ENCODE measurements at regions of chr5 and their contacts with region 1.

Region 1: DNA sequence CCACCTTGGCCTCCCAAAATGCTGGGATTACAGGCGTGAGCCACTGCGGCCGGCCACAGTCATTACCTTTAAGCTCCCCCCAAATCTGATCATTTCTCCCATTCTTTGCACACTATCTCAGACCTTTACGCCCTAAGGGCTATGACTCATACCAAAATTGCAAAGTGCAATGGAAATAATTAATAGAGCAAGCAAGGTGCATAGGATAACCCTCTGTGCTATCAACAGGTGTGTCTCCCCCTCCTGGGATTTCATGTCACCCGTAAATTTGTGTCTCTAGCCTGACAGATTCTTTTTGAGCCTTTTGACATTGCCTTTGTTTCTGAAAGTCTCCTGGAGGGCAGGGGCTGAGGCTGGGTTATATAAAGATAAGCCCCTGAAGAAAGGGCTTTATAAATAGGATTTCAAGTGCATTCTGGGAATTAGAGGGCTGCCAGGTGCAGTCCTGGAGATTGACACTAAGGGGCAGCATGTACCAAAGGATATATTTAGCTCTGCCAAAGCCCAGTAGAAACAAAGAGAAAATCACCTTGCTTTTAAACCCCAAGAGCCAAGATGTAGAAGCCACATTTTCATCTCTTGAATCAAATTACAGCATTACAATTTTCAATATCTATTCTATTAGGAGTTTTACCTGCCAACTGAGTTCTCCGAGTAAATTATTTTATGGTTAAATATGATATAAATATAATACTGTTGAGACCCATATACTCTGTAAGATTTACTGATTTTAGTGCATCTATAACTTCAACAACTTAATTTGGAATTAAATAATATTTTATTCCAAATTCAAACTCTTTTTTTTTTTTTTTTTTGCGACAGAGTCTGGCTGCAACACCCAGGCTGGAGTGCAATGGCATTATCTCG is 18.2 kb downstream of the S100Z start:
- DNase-seq: peak; percentile 67 to 76 (median 72)
- ATAC-seq: peak; percentile 92
- H3K4me3 ChIP-seq: no peak overlapping the region
- H3K27ac ChIP-seq: no peak overlapping the region
- H3K4me1 ChIP-seq: no peaks in the 10 kb centered on the region
- H3K27me3 ChIP-seq: no peaks in the 10 kb centered on the region
- CTCF ChIP-seq: peak; percentile 76 to 94 (median 81)
- EP300 ChIP-seq: no peak
- POLR2A ChIP-seq: no peak
- RAD21 ChIP-seq: peak; percentile 95

Region 2: GRCh38 chr5:76256116-76256889 is 611.8 kb before region 1 on chr5:
- CTCF ChIA-PET with region 1: no interaction called
- POLR2A ChIA-PET with region 1: no interaction called
- in situ Hi-C with region 1: no loop called
- intact Hi-C with region 1: no loop called
- DNase-seq: peak; percentile 31 to 79 (median 50)
- ATAC-seq: peak; percentile 99
- H3K4me3 ChIP-seq: no peak overlapping the region
- H3K27ac ChIP-seq: no peak overlapping the region
- H3K4me1 ChIP-seq: no peaks in the 10 kb centered on the region
- H3K27me3 ChIP-seq: peaks cover 0 to 16% of the 10 kb centered on the region in 2 experiments; a peak in 2 of 5 replicates
- CTCF ChIP-seq: peak; percentile 81 to 94 (median 83)
- EP300 ChIP-seq: no peak
- POLR2A ChIP-seq: no peak
- RAD21 ChIP-seq: peak; percentile 95 to 96

Region 3: DNA sequence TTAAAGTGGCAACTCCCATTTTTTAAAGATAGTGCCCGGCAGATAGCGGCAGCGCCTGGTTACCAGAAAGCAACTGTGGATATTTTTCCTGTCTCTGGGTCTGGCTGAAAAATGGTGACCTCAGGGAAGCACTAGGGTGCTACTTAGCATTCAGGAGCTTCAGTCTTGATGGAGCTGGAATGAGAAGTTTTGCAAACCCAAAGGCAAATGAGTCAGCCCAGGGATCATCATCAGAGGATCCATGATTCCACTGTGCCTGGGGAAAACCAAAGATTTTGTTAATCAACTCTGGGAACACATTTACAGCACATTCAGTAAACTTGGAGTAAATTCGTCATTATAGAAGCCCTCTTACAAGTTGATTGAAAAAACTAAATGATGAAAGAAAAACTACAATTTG is 125.5 kb before region 1 on chr5:
- CTCF ChIA-PET with region 1: no interaction called
- POLR2A ChIA-PET with region 1: no interaction called
- in situ Hi-C with region 1: no loop called
- intact Hi-C with region 1: no loop called
- DNase-seq: no peak
- ATAC-seq: no peak
- H3K4me3 ChIP-seq: no peak overlapping the region
- H3K27ac ChIP-seq: no peak overlapping the region
- H3K4me1 ChIP-seq: peaks cover 6 to 17% of the 10 kb centered on the region in 2 experiments; a peak in 3 of 5 replicates
- H3K27me3 ChIP-seq: no peaks in the 10 kb centered on the region
- CTCF ChIP-seq: no peak
- EP300 ChIP-seq: no peak
- POLR2A ChIP-seq: no peak
- RAD21 ChIP-seq: no peak

Region 4: DNA sequence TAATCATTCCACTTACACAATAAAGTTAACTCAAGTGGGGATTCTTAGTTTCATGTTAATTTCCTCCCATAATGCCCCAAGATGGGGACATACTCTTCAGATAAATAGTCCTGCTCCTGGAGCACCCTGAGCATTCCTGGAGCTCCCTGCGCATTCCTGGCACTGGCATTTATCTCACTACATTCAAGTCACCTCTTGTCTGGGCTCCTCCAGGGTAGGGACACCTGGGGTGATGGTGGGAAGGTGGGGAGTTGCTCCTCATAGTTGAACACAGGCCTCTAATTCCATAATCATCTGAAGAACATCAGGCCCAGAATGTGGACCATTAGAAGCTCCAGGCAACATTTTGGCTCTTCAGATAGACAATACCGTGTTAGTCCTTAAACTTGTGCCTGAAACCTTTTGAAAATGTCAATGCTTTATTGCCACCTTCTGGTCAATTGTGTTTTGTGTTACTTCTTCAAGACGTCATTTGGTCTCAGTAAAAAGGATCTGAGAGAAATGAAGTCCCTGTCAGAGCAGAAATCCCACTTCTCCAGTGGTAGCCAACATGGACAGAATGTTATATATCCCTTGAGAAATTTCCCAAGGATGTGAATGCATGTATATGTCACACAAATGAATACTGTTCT is 148.0 kb after region 1 on chr5:
- CTCF ChIA-PET with region 1: interaction called, 29 read pairs
- POLR2A ChIA-PET with region 1: no interaction called
- in situ Hi-C with region 1: loop called (anchors 5 kb)
- intact Hi-C with region 1: loop called (anchors 1 kb)
- DNase-seq: peak in 2 of 4 experiments; percentile 21 to 66
- ATAC-seq: peak; percentile 75
- H3K4me3 ChIP-seq: no peak overlapping the region
- H3K27ac ChIP-seq: no peak overlapping the region
- H3K4me1 ChIP-seq: no peaks in the 10 kb centered on the region
- H3K27me3 ChIP-seq: peaks cover 0 to 4% of the 10 kb centered on the region in 2 experiments; a peak in 1 of 5 replicates
- CTCF ChIP-seq: peak; percentile 33 to 64 (median 47); a peak in 4 of 6 replicates
- EP300 ChIP-seq: no peak
- POLR2A ChIP-seq: no peak
- RAD21 ChIP-seq: peak; percentile 82 to 83

Region 5: DNA sequence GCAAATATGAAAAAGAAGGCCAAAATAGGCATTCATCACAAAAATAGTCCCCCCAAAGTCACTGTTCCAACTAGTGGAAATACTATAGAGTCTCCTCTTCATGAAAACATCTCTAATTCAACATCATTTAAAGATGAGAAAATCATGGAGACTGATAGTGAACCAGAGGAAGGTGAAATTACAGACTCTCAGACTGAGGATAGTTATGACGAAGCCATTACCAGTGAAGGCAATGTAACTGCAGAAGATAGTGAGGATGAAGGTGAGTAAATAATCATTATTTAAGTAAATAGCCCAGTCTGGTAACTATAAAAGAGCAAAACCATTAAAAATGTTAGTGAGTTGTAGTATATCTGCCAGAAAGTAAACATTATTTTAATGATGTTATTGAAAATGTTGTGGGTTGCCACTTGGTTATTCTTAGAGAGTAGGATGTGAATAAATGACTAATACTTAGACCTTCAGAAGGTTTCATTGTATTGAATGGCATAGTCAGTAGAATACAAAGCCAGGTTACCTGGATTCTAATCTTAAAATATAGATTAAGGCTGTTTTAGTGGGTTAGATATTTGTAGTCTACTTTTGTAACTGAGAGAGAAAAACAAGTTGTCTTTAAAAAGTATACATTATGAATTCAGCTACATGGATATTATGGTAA is 178.5 kb after region 1 on chr5:
- CTCF ChIA-PET with region 1: no interaction called
- POLR2A ChIA-PET with region 1: no interaction called
- in situ Hi-C with region 1: no loop called
- intact Hi-C with region 1: no loop called
- DNase-seq: no peak
- ATAC-seq: no peak
- H3K4me3 ChIP-seq: no peak overlapping the region
- H3K27ac ChIP-seq: no peak overlapping the region
- H3K4me1 ChIP-seq: no peaks in the 10 kb centered on the region
- H3K27me3 ChIP-seq: no peaks in the 10 kb centered on the region
- CTCF ChIP-seq: no peak
- EP300 ChIP-seq: no peak
- POLR2A ChIP-seq: no peak
- RAD21 ChIP-seq: no peak

Region 6: GRCh38 chr5:77076961-77077823 is 209.1 kb after region 1 on chr5:
- CTCF ChIA-PET with region 1: interaction called, 11 read pairs
- POLR2A ChIA-PET with region 1: no interaction called
- in situ Hi-C with region 1: no loop called
- intact Hi-C with region 1: loop called (anchors 1 kb)
- DNase-seq: peak; percentile 76 to 83 (median 80)
- ATAC-seq: peak; percentile 97
- H3K4me3 ChIP-seq: peak overlapping the region; percentile 59
- H3K27ac ChIP-seq: no peak overlapping the region
- H3K4me1 ChIP-seq: peaks cover 0 to 13% of the 10 kb centered on the region in 2 experiments; a peak in 3 of 5 replicates
- H3K27me3 ChIP-seq: no peaks in the 10 kb centered on the region
- CTCF ChIP-seq: peak; percentile 50 to 86 (median 61); a peak in 5 of 6 replicates
- EP300 ChIP-seq: no peak
- POLR2A ChIP-seq: no peak
- RAD21 ChIP-seq: peak; percentile 45 to 52; a peak in 3 of 4 replicates

Region 7: DNA sequence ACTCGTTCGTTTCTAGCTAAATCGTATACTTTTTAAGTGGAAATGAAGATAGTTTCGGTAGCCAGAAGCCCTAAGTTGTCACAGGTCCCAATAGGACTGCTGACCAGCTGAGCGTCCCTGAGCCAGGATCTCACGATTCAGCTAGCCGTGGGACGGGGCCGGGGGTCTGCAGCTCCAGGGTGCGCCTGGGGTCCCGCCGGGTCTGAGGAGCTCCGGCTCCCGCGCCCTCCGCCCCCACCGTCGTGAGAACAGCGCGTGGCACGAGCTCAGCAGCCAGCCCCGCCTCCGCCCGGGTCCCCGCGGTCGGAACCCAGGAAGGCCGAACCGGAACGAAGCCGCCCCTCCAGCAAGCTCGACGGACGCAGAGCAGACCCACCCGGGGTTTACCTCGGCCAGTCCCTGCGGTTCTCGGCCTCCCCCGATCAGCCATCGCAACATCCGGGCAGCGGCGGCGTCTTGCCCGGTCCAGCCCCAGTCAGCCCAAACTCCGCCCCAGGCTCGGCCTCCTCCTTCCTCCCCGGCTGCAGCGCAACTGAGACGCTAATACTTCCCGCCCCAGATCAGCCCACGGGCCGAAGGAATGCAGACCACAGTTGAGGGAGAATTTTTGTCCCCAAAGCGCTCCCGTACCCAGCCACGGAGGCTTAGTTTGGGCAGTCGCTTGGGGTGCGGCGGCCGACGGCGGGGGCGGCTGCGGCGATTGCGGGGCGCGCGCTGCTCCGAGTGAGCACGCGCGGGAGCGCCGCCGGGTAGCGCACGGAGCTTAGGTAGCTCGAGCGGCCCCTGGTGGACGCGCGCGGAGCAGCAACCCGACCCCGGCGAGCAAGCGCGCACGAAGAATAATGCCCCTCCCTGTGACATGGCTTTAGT is 624.0 kb after region 1 on chr5 and contains the start of gene WDR41:
- CTCF ChIA-PET with region 1: no interaction called
- POLR2A ChIA-PET with region 1: interaction called, 3 read pairs
- in situ Hi-C with region 1: no loop called
- intact Hi-C with region 1: loop called (anchors 5 kb)
- DNase-seq: peak; percentile 87 to 92 (median 88)
- ATAC-seq: peak; percentile 96
- H3K4me3 ChIP-seq: peak within 1 kb of the TSS; percentile 66
- H3K27ac ChIP-seq: peak within 1 kb of the TSS; percentile 78
- H3K4me1 ChIP-seq: peaks cover 4 to 5% of the 10 kb centered on the region in 2 experiments; a peak in 1 of 5 replicates
- H3K27me3 ChIP-seq: no peaks in the 10 kb centered on the region
- CTCF ChIP-seq: peak; percentile 83 to 87 (median 85)
- EP300 ChIP-seq: no peak
- POLR2A ChIP-seq: peak; percentile 88
- RAD21 ChIP-seq: peak; percentile 77
- polyA plus RNA-seq, gene WDR41: 66.2 to 67.2 TPM

Measured in K562 (cell line).